Body of pancreas (tissue), 4 donors: ENCODE measurements at regions of chr9 and their contacts with region 1.

Region 1: GRCh38 chr9:111301195-111301594 is 28.8 kb downstream of the OR2K2 start:
- DNase-seq: no peak
- ATAC-seq: peak; percentile 40
- H3K4me3 ChIP-seq: no peak overlapping the region
- H3K27ac ChIP-seq: no peak overlapping the region
- H3K4me1 ChIP-seq: no peaks in the 10 kb centered on the region
- H3K27me3 ChIP-seq: no peaks in the 10 kb centered on the region
- CTCF ChIP-seq: no peak
- POLR2A ChIP-seq: no peak

Region 2: DNA sequence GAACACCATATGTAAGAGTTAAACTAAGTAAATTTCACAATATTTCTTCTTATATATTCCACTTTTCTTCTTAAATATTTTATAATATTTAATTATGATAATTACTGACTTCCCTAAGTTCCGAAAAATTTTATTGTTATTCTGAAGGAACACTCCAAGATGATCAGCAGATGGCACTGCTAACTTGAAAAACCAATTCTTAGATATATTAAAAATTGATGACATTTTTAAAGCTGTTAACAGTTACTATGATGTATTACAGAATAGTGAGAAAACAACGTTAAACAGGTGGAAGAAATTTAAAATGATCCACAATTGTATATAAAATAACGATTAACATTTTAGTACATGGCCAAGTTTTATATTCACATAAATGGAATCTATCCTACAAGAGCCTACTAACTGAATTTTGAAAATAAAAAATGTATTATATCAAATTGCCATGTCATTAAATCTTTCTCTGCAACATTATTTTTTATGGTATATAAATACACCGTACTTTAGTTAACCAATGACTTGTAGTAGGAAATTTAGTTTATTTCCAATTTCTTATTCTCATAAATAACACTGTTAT is 662.7 kb before region 1 on chr9:
- intact Hi-C with region 1: loop called (anchors 10 kb)
- DNase-seq: no peak
- ATAC-seq: no peak
- H3K4me3 ChIP-seq: no peak overlapping the region
- H3K27ac ChIP-seq: no peak overlapping the region
- H3K4me1 ChIP-seq: no peaks in the 10 kb centered on the region
- H3K27me3 ChIP-seq: no peaks in the 10 kb centered on the region
- CTCF ChIP-seq: peak in 3 of 7 experiments; percentile 27 to 41 (median 38)
- POLR2A ChIP-seq: no peak